ENCODE measurements at regions of chr1 and their contacts with region 1.

Region 1: DNA sequence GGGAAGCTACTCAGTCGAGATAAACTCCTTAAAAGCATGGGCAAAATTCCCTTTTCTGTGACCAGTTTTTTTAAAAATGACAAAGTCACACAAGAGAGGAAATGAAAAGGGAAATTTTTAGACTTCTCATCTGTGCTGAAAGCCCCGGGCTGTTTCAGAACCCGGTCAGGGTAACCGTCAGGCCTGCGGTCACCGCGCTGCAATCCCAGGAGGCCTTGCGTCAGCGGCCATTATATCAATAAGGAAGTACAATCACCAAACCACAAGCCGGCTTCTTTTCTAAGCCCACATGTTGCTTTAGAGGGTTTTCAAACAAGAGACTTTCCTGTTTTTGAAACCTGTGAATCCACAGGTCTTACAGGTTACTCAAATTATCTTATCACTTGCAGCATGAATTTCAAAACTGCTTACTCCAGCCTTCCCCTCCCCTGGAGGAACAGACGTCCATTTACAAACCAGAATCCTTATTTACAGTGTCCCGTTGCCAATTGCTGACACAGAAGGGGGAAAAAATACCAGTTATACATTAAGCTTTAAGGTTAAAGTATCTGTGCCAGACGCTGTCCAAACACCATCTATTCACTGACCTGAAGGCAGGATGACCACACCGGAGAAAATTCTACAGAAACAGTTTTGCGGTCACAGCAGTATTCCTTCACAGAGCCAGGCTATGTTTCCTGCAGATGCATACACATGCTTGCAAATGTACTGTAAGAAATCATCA is 165.3 kb downstream of the TOMM20 start:
- DNase-seq: peak; percentile 95
- ATAC-seq: peak; percentile 94
- H3K4me3 ChIP-seq: peak overlapping the region in 4 of 5 experiments; percentile 20 to 53 (median 35)
- H3K4me3 Mint-ChIP-seq: peak overlapping the region; percentile 88
- H3K27ac ChIP-seq: peak overlapping the region; percentile 83 to 90
- H3K27ac Mint-ChIP-seq: peak overlapping the region; percentile 96
- H3K4me1 ChIP-seq: peaks cover 50 to 62% of the 10 kb centered on the region in 2 donors
- H3K4me1 Mint-ChIP-seq: peaks cover 59% of the 10 kb centered on the region
- H3K27me3 ChIP-seq: no peaks in the 10 kb centered on the region
- H3K27me3 Mint-ChIP-seq: no peaks in the 10 kb centered on the region
- CTCF ChIP-seq: no peak

Region 2: DNA sequence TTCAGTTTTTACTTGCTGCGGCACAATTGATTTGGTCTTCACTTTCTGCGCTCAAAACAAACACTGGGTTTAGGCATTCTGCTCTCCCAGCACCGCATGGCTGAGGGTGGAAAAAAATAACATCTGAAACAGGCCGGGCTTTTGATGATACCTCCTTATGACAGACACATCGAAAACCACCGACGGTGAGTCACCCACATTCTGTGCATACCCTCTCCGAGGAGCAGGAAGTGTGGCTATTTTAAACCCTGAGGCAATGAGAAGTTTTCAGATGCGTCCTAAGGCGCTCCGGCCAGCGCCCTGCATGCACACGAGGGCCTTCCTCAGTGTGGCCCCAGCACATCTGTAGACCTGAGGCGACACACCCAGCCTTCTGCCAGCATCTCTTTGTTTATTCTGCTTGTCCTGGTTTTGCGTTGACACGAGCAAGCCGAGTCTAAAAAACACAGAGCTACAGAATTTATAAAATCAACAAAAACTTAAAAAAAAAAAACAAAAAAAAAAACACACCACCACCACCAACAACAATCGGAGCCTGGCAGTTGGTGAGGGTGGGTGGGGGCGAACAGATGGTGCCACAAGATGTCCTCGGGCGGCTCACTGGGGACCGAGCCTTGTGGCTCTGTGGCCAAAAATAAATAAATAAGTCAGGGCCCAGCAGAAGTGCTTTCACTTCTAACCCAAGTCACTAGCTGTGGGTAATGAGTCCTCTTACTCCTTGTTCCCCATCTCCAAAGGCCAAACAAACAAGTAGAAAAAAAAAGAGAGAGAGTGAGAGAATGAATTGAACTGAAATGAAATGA is 190.8 kb before region 1 on chr1:
- CTCF ChIA-PET with region 1: no interaction called
- POLR2A ChIA-PET with region 1: no interaction called
- intact Hi-C with region 1: loop called (anchors 1 kb)
- DNase-seq: peak; percentile 83
- ATAC-seq: peak; percentile 83
- H3K4me3 ChIP-seq: peak overlapping the region; percentile 2 to 49 (median 33)
- H3K4me3 Mint-ChIP-seq: peak overlapping the region; percentile 82
- H3K27ac ChIP-seq: peak overlapping the region; percentile 90 to 91
- H3K27ac Mint-ChIP-seq: peak overlapping the region; percentile 95
- H3K4me1 ChIP-seq: peaks cover 29 to 39% of the 10 kb centered on the region in 2 donors
- H3K4me1 Mint-ChIP-seq: peaks cover 49% of the 10 kb centered on the region
- H3K27me3 ChIP-seq: peaks cover 0 to 9% (median 5%) of the 10 kb centered on the region in 4 experiments
- H3K27me3 Mint-ChIP-seq: no peaks in the 10 kb centered on the region
- CTCF ChIP-seq: no peak

Region 3: DNA sequence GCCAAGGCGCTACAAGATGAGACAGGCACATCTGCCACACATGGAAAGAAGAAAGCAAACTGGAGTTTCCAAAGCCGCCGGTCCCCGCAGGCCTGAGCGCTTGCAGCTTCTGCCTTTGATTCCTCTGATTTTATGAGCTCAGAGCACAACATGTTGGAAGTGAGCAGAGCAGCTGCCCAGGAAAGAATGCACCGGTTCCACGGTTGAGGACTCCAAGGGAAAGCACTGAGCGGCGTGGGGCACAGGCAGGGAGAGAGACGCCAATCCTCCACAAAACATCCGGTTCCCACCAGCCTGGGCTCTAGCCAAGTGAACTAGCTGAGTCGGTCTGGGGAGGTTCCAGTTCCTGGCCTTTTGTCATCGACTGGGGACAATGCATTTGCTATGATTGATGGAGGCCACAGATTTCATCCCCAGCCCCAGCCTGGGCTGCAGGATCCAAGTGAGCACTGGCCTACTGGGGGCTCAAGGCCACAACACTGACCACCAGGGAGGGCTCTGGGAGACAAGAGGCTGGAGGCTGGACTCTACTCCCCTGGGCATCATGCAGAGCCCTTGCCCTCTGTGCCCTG is 100.3 kb before region 1 on chr1:
- CTCF ChIA-PET with region 1: no interaction called
- POLR2A ChIA-PET with region 1: no interaction called
- intact Hi-C with region 1: no loop called
- DNase-seq: no peak
- ATAC-seq: no peak
- H3K4me3 ChIP-seq: no peak overlapping the region
- H3K4me3 Mint-ChIP-seq: no peak overlapping the region
- H3K27ac ChIP-seq: no peak overlapping the region
- H3K27ac Mint-ChIP-seq: no peak overlapping the region
- H3K4me1 ChIP-seq: no peaks in the 10 kb centered on the region
- H3K4me1 Mint-ChIP-seq: no peaks in the 10 kb centered on the region
- H3K27me3 ChIP-seq: no peaks in the 10 kb centered on the region
- H3K27me3 Mint-ChIP-seq: no peaks in the 10 kb centered on the region
- CTCF ChIP-seq: no peak

Region 4: GRCh38 chr1:234925440-234926263 is 37.7 kb before region 1 on chr1:
- CTCF ChIA-PET with region 1: no interaction called
- POLR2A ChIA-PET with region 1: no interaction called
- intact Hi-C with region 1: loop called (anchors 1 kb)
- DNase-seq: no peak
- ATAC-seq: no peak
- H3K4me3 ChIP-seq: no peak overlapping the region
- H3K4me3 Mint-ChIP-seq: peak overlapping the region; percentile 81
- H3K27ac ChIP-seq: no peak overlapping the region
- H3K27ac Mint-ChIP-seq: peak overlapping the region; percentile 88
- H3K4me1 ChIP-seq: peaks cover 28 to 41% of the 10 kb centered on the region in 2 donors
- H3K4me1 Mint-ChIP-seq: peaks cover 31% of the 10 kb centered on the region
- H3K27me3 ChIP-seq: no peaks in the 10 kb centered on the region
- H3K27me3 Mint-ChIP-seq: no peaks in the 10 kb centered on the region
- CTCF ChIP-seq: no peak

Region 5: GRCh38 chr1:234978397-234979295 is 15.3 kb after region 1 on chr1:
- CTCF ChIA-PET with region 1: interaction called, 6 read pairs
- POLR2A ChIA-PET with region 1: interaction called, 6 read pairs
- intact Hi-C with region 1: loop called (anchors 1 kb)
- DNase-seq: peak; percentile 87
- ATAC-seq: peak; percentile 74
- H3K4me3 ChIP-seq: peak overlapping the region in 3 of 5 experiments; percentile 18 to 42 (median 34)
- H3K4me3 Mint-ChIP-seq: peak overlapping the region; percentile 88
- H3K27ac ChIP-seq: peak overlapping the region; percentile 64 to 73
- H3K27ac Mint-ChIP-seq: peak overlapping the region; percentile 98
- H3K4me1 ChIP-seq: peaks cover 42 to 52% of the 10 kb centered on the region in 2 donors
- H3K4me1 Mint-ChIP-seq: peaks cover 62% of the 10 kb centered on the region
- H3K27me3 ChIP-seq: no peaks in the 10 kb centered on the region
- H3K27me3 Mint-ChIP-seq: no peaks in the 10 kb centered on the region
- CTCF ChIP-seq: peak; percentile 22

Region 6: GRCh38 chr1:235328357-235329138 is 365.2 kb after region 1 on chr1 and contains the start of gene GGPS1:
- CTCF ChIA-PET with region 1: no interaction called
- POLR2A ChIA-PET with region 1: no interaction called
- intact Hi-C with region 1: loop called (anchors 5 kb)
- DNase-seq: peak; percentile 98
- ATAC-seq: peak; percentile 75
- H3K4me3 ChIP-seq: peak within 1 kb of the TSS; percentile 89 to 99 (median 99)
- H3K4me3 Mint-ChIP-seq: no peak within 1 kb of the TSS
- H3K27ac ChIP-seq: peak within 1 kb of the TSS; percentile 89 to 98
- H3K27ac Mint-ChIP-seq: no peak within 1 kb of the TSS
- H3K4me1 ChIP-seq: peaks cover 33 to 58% of the 10 kb centered on the region in 2 donors
- H3K4me1 Mint-ChIP-seq: peaks cover 53% of the 10 kb centered on the region
- H3K27me3 ChIP-seq: no peaks in the 10 kb centered on the region
- H3K27me3 Mint-ChIP-seq: no peaks in the 10 kb centered on the region
- CTCF ChIP-seq: peak; percentile 36
- total RNA-seq, gene GGPS1: 43.6 and 46.8 TPM in 2 replicates